ENCODE measurements at regions of chr15 and their contacts with region 1.

Region 1: GRCh38 chr15:94670438-94671034 is 439.2 kb downstream of the MCTP2 start:
- DNase-seq: no peak
- ATAC-seq: no peak
- H3K4me3 Mint-ChIP-seq: no peak overlapping the region
- H3K27ac Mint-ChIP-seq: no peak overlapping the region
- H3K4me1 Mint-ChIP-seq: peaks cover 2% of the 10 kb centered on the region
- H3K27me3 Mint-ChIP-seq: peaks cover 34% of the 10 kb centered on the region

Region 2: GRCh38 chr15:94582369-94582768 is 88.2 kb before region 1 on chr15:
- CTCF ChIA-PET with region 1: interaction called, 25 read pairs
- DNase-seq: peak; percentile 75
- ATAC-seq: peak; percentile 72
- H3K4me3 Mint-ChIP-seq: no peak overlapping the region
- H3K27ac Mint-ChIP-seq: no peak overlapping the region
- H3K4me1 Mint-ChIP-seq: peaks cover 35% of the 10 kb centered on the region
- H3K27me3 Mint-ChIP-seq: peaks cover 85% of the 10 kb centered on the region

Region 3: GRCh38 chr15:94774836-94775235 is 104.3 kb after region 1 on chr15:
- CTCF ChIA-PET with region 1: no interaction called
- DNase-seq: no peak
- ATAC-seq: no peak
- H3K4me3 Mint-ChIP-seq: no peak overlapping the region
- H3K27ac Mint-ChIP-seq: no peak overlapping the region
- H3K4me1 Mint-ChIP-seq: no peaks in the 10 kb centered on the region
- H3K27me3 Mint-ChIP-seq: no peaks in the 10 kb centered on the region

Measured in activated CD8-positive, alpha-beta memory T cell treated with anti-CD3 and anti-CD28 coated beads, Interleukin-2, amount 10 ng/mL, durations not matched to agents 7 days and 5 days (primary cell).